Heart right ventricle (tissue), 16 donors: ENCODE measurements at regions of chr10 and their contacts with region 1.

Region 1: GRCh38 chr10:125795128-125795527 is 19.5 kb upstream of the MMP21 start:
- DNase-seq: peak in 1 of 2 donors; percentile 50
- ATAC-seq: peak; percentile 63 to 94 (median 83)
- H3K4me3 ChIP-seq: no peak overlapping the region
- H3K27ac ChIP-seq: peak overlapping the region in 3 of 10 donors; percentile 9 to 56 (median 33)
- H3K4me1 ChIP-seq: peaks cover 0 to 17% (median 0%) of the 10 kb centered on the region in 9 donors
- H3K27me3 ChIP-seq: no peaks in the 10 kb centered on the region
- CTCF ChIP-seq: no peak

Region 2: DNA sequence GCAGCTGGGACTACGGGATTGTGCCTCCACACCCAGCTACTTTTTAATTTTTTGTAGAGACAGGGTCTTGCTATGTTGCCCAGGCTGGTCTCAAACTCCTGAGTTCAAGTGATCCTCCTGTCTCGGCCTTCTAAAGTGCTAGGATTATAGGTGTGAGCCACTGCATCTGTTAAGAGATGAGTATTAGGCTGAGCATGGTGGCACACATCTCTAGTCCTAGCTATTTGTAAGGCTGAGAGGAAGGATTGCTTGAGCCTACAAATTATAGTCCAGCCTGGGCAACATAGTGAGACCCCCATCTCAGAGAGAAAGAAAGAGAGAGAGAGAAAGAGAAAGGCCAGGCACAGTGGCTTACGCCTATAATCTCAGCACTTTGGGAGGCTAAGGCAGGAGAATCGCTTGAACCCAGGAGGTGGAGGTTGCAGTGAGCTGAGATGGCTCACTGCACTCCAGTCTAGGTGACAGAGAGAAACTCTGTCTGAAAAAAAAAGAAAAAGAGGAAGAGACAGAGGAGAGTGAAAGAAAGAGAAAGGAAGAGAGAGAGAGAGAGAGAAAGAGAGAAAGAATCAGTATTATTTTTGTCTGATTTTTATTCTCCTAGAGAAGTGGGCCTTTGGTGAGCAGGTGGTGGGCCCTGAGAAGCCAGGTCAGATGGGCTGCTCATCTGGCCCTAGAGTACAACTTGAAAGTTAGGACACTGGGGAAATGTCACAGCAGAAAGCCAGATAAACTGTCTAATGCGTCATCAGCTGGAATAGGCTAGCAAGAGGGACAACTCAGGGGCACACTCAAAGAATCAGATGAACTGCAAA is 911.4 kb before region 1 on chr10:
- intact Hi-C with region 1: loop called in 1 of 10 experiments (anchors 5 kb)
- DNase-seq: no peak
- ATAC-seq: peak in 2 of 8 donors; percentile 55 to 71
- H3K4me3 ChIP-seq: no peak overlapping the region
- H3K27ac ChIP-seq: no peak overlapping the region
- H3K4me1 ChIP-seq: no peaks in the 10 kb centered on the region
- H3K27me3 ChIP-seq: no peaks in the 10 kb centered on the region
- CTCF ChIP-seq: no peak

Region 3: DNA sequence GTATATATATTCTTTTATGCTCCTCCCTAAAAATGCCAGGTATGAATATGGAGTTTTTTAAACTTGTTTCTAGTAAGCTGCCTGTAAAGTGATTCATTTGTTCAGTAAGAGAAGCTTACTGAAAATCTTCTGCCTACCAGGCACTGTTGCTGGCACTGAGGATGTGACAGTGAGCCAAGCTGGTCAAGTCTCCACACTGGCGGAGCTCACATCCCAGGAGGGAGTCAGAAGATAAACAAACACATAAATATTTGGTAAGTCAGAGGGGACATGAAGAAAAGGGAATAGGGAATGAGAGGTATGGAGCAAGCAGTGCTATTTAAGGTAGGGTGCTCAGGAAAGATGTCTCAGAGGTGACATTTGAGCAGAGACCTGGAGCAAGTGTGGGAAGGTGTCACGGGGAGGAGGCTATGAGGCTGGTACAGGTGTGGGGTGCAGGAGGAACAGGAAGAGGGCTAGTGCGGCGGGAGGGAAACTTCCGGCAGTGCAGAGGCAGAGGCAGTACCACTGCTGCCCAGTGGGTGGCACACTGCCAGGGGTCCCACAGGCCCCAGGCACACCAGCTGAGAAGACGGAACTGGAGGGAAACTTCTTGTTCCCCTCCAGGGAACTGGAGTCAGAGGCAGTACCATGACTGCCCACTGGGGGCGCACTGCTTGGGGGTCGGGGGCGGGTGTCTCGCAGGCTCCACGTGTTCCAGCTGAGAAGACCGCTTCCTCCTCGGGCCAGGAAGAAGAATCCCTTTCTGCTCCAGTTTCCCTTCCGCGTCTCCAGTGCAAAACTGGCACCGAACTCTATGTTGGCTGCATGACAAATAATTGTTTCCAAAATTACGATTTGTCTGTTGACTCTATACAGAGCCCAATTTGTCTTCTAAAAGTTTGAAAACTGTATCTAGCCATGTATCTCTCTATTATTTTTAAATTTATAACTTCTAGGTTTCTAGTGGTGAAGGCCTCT is 273.1 kb before region 1 on chr10:
- intact Hi-C with region 1: no loop called
- DNase-seq: no peak
- ATAC-seq: no peak
- H3K4me3 ChIP-seq: no peak overlapping the region
- H3K27ac ChIP-seq: no peak overlapping the region
- H3K4me1 ChIP-seq: no peaks in the 10 kb centered on the region
- H3K27me3 ChIP-seq: peaks cover 0 to 7% (median 0%) of the 10 kb centered on the region in 7 donors
- CTCF ChIP-seq: peak in 7 of 9 donors; percentile 18 to 60 (median 48)

Region 4: DNA sequence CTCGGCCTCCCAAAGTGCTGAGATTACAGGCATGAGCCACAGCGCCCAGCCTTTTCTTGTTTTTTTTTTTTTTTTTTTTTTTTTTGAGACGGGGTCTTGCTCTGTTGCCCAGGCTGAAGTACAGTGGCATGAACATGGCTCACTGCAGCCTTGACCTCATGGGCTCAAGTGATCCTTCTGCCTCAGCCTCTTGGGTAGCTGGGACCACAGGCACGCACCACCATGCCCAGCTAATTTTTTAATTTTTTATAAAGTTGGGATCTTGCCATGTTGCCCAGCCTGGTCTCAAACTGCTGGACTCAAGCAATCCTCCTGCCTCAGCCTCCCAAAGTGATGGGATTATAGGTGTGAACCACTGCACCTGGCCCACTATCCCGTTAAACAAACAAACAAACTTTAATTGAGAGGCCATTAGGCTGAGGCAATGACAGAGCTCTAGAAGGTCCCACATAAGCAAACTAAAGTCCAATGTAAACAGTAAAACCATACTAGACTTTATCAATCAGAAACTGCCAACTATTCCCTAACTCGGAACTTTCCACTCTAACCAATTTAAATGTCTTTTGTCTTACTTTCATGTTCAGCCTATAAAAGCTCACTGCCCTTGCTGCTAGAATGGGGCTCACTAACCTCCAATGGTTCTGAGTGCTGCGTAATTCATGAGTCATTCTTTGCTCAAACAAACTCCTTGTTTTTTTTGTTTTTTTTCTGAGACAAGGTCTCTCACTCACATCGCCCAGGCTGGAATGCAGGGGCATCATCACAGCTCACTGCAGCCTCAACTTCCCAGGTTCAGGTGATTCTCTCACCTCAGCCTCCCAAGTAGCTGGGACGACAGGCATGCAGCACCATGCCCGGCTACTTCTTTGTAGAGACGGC is 84.1 kb after region 1 on chr10:
- intact Hi-C with region 1: no loop called
- DNase-seq: no peak
- ATAC-seq: no peak
- H3K4me3 ChIP-seq: peak overlapping the region in 6 of 10 donors; percentile 4 to 40 (median 28)
- H3K27ac ChIP-seq: no peak overlapping the region
- H3K4me1 ChIP-seq: peaks cover 0 to 32% (median 10%) of the 10 kb centered on the region in 9 donors
- H3K27me3 ChIP-seq: no peaks in the 10 kb centered on the region
- CTCF ChIP-seq: no peak

Region 5: GRCh38 chr10:126049759-126050695 is 254.9 kb after region 1 on chr10:
- intact Hi-C with region 1: no loop called
- DNase-seq: peak; percentile 37 to 47
- ATAC-seq: peak; percentile 68 to 94 (median 88)
- H3K4me3 ChIP-seq: no peak overlapping the region
- H3K27ac ChIP-seq: peak overlapping the region in 5 of 10 donors; percentile 14 to 71 (median 44)
- H3K4me1 ChIP-seq: peaks cover 0 to 33% (median 18%) of the 10 kb centered on the region in 9 donors
- H3K27me3 ChIP-seq: peaks cover 0 to 3% (median 0%) of the 10 kb centered on the region in 7 donors
- CTCF ChIP-seq: no peak

Region 6: DNA sequence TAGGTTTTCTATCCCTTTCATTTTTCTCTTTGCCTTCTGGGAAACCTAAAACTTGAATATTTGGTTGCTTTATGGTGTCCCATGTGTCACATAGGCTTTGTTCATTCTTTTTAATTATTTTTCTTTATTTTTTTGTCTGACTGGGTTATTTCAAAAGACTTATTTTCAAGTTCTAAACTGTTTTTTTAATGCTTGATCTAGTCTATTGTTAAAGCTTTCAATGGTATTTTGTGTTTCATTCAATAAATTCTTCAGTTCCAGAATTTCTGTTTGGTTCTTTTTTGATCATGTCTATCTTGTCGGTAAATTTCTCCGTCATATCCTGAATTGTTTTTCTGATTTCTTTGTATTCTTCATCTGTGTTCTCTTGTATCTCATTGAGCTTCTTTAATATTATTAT is 1840.8 kb after region 1 on chr10:
- intact Hi-C with region 1: no loop called
- DNase-seq: no peak
- ATAC-seq: no peak
- H3K4me3 ChIP-seq: no peak overlapping the region
- H3K27ac ChIP-seq: no peak overlapping the region
- H3K4me1 ChIP-seq: no peaks in the 10 kb centered on the region
- H3K27me3 ChIP-seq: no peaks in the 10 kb centered on the region
- CTCF ChIP-seq: no peak